PC-9 (cell line): ENCODE measurements at regions of chr10 and their contacts with region 1.

Region 1: DNA sequence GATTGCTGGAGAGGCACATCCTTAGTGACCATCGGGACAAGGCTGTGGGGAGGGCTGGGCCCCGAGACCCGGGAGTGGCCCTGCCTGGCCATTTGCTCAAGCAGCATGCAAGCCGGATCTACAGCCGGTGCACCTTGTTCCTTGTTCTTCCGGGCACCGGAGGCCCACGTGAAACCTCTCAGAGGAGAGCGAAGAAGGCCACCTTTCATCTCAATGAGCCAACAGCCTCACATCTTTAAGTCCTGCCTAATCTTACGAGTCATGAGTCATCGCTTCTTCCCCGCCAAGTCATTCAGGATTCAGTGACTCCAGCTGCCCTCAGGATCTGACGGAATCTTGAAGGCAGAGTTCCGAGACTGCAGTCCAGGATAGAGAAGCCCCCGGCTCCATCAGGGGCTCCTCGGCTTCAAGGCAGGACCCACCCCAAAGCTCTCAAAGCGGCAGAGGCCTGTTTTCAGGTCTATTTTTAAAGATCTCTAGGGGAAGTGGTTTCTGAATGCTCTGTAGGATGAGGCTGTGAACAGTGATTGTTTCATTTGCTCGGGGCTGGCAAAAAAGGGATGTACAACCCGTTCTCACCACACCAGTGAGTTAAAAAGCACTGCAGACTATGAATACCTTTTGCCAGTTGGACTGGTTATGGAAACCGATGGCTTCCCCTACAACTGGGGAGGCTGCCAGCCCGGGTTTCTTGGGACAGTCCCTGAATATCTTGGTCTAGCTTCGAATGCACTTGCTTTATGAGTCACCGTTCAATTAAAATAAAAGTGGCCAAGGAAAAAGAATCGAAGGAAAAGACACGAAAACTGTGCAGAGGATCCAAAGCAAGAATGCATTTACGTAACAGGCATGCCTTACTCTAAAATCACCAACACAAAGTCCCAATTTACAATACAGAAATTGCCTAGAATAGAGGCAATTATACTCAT is 57.2 kb upstream of the ECHDC3 start:
- DNase-seq: peak; percentile 73 to 94
- H3K4me3 ChIP-seq: peak overlapping the region; percentile 53; the same call in 1 of the 2 replicates
- H3K27ac ChIP-seq: peak overlapping the region; percentile 98
- H3K4me1 ChIP-seq: peaks cover 61% of the 10 kb centered on the region
- H3K27me3 ChIP-seq: no peaks in the 10 kb centered on the region
- CTCF ChIP-seq: no peak

Region 2: DNA sequence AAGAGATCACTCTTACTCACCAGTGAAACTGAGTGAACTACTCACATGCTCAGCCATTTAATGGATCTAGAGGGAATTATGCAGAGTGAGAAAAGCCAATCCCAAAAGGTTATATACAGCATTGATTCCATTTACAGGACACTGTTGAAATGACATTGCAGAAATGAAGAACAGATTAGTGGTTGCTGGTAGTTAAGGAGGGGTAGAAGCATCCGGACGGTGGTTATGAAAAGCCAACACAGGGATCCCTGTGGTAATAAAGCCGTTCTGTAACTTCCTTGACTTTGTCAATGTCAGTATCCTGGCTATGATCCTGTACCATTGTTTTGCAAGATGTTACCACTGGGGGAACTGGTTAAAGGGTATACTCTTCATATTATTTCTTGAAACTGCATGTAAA is 327.0 kb before region 1 on chr10:
- CTCF ChIA-PET with region 1: no interaction called
- POLR2A ChIA-PET with region 1: no interaction called
- intact Hi-C with region 1: no loop called
- DNase-seq: no peak
- H3K4me3 ChIP-seq: no peak overlapping the region
- H3K27ac ChIP-seq: no peak overlapping the region
- H3K4me1 ChIP-seq: no peaks in the 10 kb centered on the region
- H3K27me3 ChIP-seq: peaks cover 21% of the 10 kb centered on the region
- CTCF ChIP-seq: no peak

Region 3: DNA sequence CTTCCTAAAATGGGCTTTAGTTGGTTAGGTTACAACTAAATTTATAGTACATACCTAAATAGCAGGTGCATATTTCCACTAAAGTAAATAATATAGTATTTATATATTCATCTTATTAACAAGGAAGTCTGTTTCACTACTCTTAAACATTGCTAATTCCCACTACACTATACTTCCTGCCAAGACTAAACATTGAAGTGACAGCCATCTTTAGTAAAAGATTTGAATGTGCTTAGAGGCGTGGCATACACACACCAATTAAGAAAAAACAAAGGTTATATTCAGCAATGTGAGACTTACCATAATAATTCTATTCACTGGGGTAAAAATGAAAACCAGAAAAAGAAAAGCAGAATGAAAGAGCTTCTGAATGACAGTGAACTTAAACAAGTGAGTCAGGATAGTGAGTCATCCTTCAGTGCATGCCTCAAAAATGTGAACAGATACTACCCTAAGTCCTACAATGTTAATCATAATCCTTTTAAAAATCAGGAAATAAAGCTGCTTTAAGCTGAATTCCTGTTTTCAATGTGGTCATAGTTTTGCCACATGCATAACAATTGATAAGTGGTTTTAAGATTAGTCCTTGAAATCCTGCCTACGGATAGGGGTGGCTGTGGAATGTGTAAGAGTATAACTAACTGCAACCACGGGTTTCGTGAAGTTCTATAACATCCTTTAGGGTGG is 132.9 kb before region 1 on chr10:
- CTCF ChIA-PET with region 1: no interaction called
- POLR2A ChIA-PET with region 1: interaction called, 9 read pairs
- intact Hi-C with region 1: loop called (anchors 1 kb)
- DNase-seq: peak; percentile 32 to 95
- H3K4me3 ChIP-seq: peak overlapping the region; percentile 21; the same call in 1 of the 2 replicates
- H3K27ac ChIP-seq: peak overlapping the region; percentile 99
- H3K4me1 ChIP-seq: peaks cover 30% of the 10 kb centered on the region
- H3K27me3 ChIP-seq: no peaks in the 10 kb centered on the region
- CTCF ChIP-seq: no peak

Region 4: DNA sequence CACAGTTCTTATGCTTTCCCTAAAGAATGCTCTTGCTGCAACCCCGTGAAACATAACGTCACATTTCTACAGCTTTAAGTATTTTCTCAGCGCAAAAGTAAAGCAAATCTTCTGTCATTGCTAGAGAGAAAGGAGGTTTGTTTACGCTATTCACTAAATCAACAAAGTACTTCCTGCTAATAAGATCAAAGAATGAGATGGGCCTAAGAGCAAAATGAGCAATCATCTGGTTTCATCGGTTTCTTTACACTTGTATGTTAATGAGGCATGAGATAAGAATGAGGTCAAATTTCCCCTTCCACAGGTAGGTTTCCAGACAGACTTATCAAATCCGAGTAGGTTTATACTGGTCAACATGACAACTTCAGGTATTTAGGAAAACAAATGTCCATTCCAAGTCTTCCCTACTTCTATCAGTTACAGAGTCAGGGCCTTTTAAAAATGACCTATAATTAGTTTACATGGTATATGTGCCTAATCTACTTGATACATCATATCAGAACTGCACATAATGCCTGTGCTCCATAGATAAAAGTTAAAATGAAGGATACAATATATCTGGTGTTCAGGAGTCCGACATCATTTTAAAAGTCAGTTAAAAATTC is 82.0 kb before region 1 on chr10:
- CTCF ChIA-PET with region 1: no interaction called
- POLR2A ChIA-PET with region 1: no interaction called
- intact Hi-C with region 1: loop called (anchors 2 kb)
- DNase-seq: peak in 1 of 2 experiments; percentile 94
- H3K4me3 ChIP-seq: peak overlapping the region; percentile 31; the same call in 1 of the 2 replicates
- H3K27ac ChIP-seq: peak overlapping the region; percentile 90
- H3K4me1 ChIP-seq: peaks cover 29% of the 10 kb centered on the region
- H3K27me3 ChIP-seq: no peaks in the 10 kb centered on the region
- CTCF ChIP-seq: no peak

Region 5: DNA sequence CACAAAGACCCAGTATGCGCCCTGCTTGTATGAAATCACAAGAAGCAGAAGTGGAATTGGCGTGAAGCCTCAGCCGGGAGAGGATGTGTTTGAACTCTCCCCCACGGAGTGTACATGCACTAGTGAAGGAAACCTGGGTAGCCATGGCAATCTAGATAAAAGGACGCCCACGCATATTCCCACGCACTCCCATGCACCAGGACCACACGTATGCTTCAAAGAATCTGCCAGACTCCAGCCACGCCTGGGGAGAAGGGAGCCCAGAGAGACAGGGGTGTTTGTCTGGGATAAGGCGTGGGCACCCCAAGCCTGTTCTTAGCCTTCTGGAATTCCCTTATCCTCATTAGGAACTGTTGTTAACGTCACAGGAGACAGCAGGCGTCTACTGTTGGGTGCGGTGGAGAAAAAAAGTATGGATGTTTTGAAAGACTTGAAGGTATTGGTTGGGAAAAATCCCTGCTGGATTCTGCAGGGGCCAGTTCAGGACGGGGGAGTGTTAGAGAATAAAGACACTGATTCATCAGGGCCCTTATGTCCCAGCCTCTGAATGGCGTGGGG is 28.3 kb after region 1 on chr10:
- CTCF ChIA-PET with region 1: no interaction called
- POLR2A ChIA-PET with region 1: interaction called, 16 read pairs
- intact Hi-C with region 1: loop called (anchors 2 kb)
- DNase-seq: no peak
- H3K4me3 ChIP-seq: no peak overlapping the region
- H3K27ac ChIP-seq: no peak overlapping the region
- H3K4me1 ChIP-seq: peaks cover 19% of the 10 kb centered on the region
- H3K27me3 ChIP-seq: no peaks in the 10 kb centered on the region
- CTCF ChIP-seq: no peak